Activated naive CD4-positive, alpha-beta T cell treated with anti-CD3 and anti-CD28 coated beads for 36 hours (primary cell): ENCODE measurements at regions of chr11 and their contacts with region 1.

Region 1: DNA sequence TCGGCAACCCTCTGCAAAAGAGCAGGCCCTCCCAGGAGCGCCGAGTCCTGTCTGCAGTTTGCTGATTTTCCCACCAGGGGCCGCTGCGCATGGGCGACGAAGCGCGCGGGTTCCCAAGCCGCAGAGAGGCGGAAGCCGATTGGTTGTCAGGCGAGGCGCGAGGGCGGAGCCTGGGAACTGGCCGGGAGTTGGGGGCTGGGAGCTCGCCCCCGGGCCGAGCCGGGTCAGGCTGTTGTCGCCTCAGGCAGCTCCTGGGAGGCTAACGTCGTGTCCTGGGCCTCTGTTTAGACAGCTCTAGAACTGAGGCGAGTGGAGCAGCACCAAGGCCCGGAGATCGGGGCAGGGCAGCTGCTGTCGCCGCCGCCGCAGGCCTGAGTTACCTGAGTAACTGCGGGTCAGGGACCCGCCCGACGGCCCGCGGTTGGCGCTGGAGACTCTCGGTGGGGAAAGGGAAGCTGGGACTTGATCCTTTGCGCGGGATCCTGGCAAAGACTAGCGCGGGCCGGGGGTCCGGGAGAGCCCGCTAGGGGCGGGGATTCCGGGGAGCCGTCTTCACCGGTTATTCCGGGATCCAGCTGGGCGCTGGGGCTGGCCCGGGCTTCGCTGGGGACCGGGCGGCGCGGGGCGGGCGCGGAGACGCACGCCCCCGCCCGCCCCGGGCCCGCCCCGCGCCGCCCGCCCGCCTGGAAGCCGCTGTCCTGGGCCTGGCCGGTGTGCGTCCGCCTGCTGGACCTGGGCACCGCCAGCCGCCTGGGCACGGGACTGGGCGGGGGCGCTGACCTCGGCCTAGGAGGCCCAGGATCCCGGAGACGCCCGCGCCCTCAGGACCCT is at the start of gene STIM1:
- DNase-seq: peak; percentile 99
- H3K4me3 Mint-ChIP-seq: peak within 1 kb of the TSS; percentile 97
- H3K27ac Mint-ChIP-seq: peak within 1 kb of the TSS; percentile 98
- H3K4me1 Mint-ChIP-seq: peaks cover 55% of the 10 kb centered on the region
- H3K27me3 Mint-ChIP-seq: no peaks in the 10 kb centered on the region
- total RNA-seq, gene STIM1: 62.9 to 68.5 TPM

Region 2: GRCh38 chr11:3674189-3674588 is 181.0 kb before region 1 on chr11:
- CTCF ChIA-PET with region 1: no interaction called
- intact Hi-C with region 1: no loop called
- DNase-seq: no peak
- H3K4me3 Mint-ChIP-seq: no peak overlapping the region
- H3K27ac Mint-ChIP-seq: no peak overlapping the region
- H3K4me1 Mint-ChIP-seq: peaks cover 3% of the 10 kb centered on the region
- H3K27me3 Mint-ChIP-seq: no peaks in the 10 kb centered on the region

Region 3: DNA sequence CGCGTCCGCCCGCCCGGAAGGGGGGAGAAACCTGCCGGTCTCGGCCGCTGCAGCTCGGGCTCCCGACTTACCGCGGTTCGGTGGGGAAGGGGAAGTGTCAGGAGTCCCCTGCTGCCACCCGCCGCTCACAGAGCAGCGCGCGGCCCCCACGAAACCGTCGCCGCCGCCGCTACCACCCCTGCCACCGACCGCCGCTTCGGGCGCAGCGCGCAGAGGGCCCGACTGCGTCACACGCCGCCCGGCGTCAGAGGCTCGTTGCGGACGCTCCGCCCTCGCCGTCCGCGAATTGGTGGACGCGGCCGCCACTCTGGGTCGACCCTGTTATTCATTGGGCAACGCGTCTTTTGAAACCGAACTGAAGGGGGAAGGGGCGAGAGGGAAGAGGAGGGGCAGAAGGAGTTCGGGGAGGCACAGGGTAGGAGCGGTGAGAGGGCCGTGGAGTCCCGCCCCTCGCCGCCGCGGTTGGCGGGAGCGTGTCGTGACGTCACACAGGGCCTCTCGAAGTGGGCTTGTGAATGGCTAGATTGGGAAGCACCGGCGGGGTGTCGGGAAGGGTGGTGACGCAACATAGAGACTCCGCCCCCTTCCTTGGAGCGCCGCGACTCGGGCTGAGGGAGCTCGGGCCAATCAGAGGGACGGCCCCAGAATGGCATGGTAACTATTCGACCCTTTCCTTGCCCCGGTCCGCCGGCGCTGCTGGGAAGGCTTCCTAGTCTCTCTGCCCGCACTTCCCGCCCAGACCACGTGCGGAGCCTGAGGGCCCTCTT is 57.7 kb before region 1 on chr11 and contains the start of gene NUP98:
- CTCF ChIA-PET with region 1: interaction called, 4 read pairs
- intact Hi-C with region 1: loop called (anchors 1 kb)
- DNase-seq: peak; percentile 100
- H3K4me3 Mint-ChIP-seq: peak within 1 kb of the TSS; percentile 98
- H3K27ac Mint-ChIP-seq: peak within 1 kb of the TSS; percentile 98
- H3K4me1 Mint-ChIP-seq: peaks cover 54% of the 10 kb centered on the region
- H3K27me3 Mint-ChIP-seq: no peaks in the 10 kb centered on the region
- total RNA-seq, gene NUP98: 90.8 to 97.6 TPM

Region 4: DNA sequence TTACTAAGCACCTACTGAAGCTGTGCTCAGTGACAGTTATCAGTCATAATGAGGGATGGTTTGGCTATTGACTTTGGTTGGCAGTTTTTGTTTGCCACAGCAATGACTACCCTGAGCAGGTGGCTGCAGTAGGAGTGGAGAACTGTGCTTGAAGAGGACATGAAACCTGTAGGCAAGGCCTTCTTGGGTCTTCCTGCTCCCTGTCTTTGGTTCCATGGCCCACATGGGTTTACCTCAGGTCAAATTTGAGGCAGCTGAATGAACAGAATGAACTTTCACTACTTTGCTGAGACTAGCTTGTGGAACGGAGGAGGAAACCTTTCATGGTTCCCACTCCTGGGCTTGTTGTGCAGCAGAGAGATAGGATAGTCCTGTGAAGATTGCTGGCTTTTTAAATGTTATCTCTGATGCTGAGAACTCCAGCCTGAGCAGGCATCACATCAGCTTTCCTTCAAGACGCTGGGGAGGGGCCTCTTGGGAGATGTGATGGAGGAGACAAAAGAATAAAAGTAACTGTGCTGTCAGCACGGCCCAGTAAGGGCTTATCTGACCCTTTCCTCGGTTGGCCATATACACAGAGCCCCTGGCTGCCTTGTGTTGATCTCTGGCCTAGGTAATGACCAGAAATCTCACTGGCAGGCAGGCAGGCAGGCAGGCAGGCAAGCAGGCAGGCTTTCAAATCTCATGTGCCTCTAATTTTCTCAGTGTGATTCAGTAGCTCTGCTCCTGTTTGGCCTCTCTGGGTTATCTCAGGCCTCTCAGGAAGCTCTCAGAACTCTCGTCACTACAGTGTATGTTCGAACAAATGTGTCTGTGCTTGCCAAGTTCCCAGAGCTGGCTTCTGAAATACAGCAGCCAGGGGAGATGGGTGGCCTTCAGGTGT is 12.3 kb after region 1 on chr11:
- CTCF ChIA-PET with region 1: interaction called, 95 read pairs
- intact Hi-C with region 1: loop called (anchors 1 kb)
- DNase-seq: peak; percentile 70
- H3K4me3 Mint-ChIP-seq: peak overlapping the region; percentile 36
- H3K27ac Mint-ChIP-seq: peak overlapping the region; percentile 87
- H3K4me1 Mint-ChIP-seq: peaks cover 81% of the 10 kb centered on the region
- H3K27me3 Mint-ChIP-seq: no peaks in the 10 kb centered on the region

Region 5: GRCh38 chr11:3905080-3905953 is 50.1 kb after region 1 on chr11:
- CTCF ChIA-PET with region 1: interaction called, 11 read pairs
- intact Hi-C with region 1: loop called (anchors 1 kb)
- DNase-seq: peak; percentile 89
- H3K4me3 Mint-ChIP-seq: peak overlapping the region; percentile 5
- H3K27ac Mint-ChIP-seq: peak overlapping the region; percentile 66
- H3K4me1 Mint-ChIP-seq: peaks cover 80% of the 10 kb centered on the region
- H3K27me3 Mint-ChIP-seq: no peaks in the 10 kb centered on the region

Region 6: DNA sequence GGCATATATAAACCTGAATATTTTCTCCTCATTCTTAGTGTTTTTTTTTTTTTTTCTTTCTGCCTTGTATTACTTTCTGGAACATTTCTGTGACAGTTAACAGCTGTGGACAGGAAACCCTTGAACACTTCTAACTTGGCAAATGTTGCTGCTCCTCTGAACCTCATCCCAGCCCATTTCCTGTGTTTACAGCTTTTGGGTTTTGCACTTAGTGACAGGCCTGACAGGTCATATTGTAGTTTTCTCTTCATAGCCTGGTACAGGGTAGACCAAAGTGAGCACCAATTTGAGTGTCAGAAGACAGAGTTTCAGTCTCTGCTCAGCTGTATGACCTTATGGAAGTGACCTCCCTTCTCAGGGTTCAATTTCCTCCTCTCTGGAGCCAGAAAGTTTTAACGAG is 91.9 kb after region 1 on chr11:
- CTCF ChIA-PET with region 1: interaction called, 10 read pairs
- intact Hi-C with region 1: loop called (anchors 1 kb)
- DNase-seq: peak; percentile 75
- H3K4me3 Mint-ChIP-seq: no peak overlapping the region
- H3K27ac Mint-ChIP-seq: peak overlapping the region; percentile 89
- H3K4me1 Mint-ChIP-seq: peaks cover 92% of the 10 kb centered on the region
- H3K27me3 Mint-ChIP-seq: no peaks in the 10 kb centered on the region

Region 7: DNA sequence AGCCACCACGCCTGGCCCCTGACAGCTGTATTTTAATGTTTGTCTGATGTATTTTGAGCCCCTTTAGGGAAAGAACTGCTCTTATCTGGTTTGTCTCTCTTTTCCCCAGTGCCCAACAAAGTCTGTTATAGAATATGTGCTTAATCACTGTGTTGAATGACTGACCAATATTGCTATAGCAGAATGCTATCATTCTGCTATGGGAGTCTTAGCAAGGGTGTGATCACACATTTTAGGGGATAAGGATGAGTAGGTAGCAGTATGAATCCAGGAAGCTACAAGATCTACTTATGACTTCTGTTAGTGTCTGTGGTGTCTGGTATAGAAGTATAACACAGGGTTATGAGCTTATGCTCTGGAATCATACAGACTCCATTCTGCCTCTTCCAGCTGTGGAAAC is 121.9 kb after region 1 on chr11:
- CTCF ChIA-PET with region 1: interaction called, 15 read pairs
- intact Hi-C with region 1: no loop called
- DNase-seq: no peak
- H3K4me3 Mint-ChIP-seq: no peak overlapping the region
- H3K27ac Mint-ChIP-seq: no peak overlapping the region
- H3K4me1 Mint-ChIP-seq: peaks cover 53% of the 10 kb centered on the region
- H3K27me3 Mint-ChIP-seq: no peaks in the 10 kb centered on the region

Region 8: DNA sequence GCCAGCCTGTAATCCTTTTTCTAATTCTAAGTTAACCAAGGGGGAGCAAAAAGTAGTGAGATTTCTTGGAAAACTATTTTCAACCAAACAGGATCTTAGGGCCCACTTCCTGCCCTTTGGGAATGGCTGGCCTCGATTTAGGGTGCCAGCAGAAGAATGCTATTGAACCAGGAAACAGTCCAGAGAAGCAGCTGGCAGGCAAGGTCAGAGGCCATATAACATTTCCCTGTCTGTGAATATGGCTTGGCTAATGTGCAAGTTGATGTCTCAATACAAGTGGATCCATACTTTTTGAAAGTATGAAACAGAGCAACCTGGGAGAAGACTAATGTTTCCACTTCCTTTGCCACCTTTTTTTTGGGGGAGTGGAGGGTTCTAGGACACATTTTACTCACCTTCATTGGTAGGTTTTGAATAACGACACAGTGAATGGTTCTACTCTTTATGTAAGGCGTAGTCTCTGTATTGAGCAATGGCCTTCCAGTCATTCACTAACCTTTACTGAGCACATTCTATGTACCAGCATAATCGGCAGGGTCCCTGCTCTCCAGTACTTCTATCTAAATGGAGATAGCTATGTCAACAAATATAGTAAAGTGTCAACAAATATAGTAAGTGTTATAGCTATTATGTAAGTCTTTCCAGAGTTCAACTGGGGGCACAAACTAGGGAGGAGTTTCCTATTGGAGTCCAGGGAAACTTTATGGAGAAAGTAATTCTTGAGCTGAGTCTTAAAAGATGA is 205.2 kb after region 1 on chr11:
- CTCF ChIA-PET with region 1: interaction called, 573 read pairs
- intact Hi-C with region 1: loop called (anchors 1 kb)
- DNase-seq: no peak
- H3K4me3 Mint-ChIP-seq: no peak overlapping the region
- H3K27ac Mint-ChIP-seq: no peak overlapping the region
- H3K4me1 Mint-ChIP-seq: peaks cover 42% of the 10 kb centered on the region
- H3K27me3 Mint-ChIP-seq: no peaks in the 10 kb centered on the region